ENCODE measurements at regions of chr10 and their contacts with region 1.

Region 1: DNA sequence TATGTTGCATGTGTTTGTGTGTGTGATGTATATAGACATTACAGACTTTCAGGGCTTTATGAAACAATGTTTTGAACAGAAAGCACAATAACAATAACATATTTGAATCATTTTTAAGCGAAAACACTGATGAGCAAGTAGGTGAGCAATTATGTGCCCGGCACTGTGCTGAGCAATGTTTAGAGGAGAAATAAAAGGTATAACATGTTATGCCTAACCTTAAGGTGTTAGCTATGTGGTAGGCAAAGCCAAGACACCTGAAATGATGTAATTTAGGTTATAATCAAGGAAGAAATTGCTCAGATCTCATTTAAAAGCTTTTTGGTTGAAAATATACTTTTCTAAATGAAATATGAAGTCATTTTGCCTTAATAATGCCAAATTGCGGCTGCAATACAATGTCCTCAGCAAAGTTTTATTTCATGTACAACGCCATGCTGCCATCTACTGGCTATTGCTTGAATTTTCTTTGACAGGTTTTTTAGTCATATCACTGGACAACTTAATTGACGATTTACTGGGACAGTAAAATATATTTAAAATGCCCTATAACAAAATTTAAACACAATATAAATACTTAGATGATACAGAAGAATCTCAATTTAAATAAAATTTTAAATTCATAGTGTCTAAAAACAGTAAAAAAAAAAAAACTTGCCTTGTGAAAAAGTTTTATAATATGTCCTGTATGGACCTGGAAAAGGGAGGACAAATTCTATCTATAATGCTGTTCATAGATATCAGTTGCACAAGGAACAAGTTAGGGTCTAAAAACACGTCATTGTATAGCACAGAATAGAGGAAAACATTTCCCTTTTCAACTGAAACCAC is 131.1 kb upstream of the CDK1 start:
- DNase-seq: peak; percentile 42
- H3K4me3 Mint-ChIP-seq: no peak overlapping the region
- H3K27ac Mint-ChIP-seq: no peak overlapping the region
- H3K4me1 Mint-ChIP-seq: peaks cover 4% of the 10 kb centered on the region
- H3K27me3 Mint-ChIP-seq: no peaks in the 10 kb centered on the region

Region 2: GRCh38 chr10:60726257-60726656 is 79.1 kb after region 1 on chr10:
- CTCF ChIA-PET with region 1: no interaction called
- DNase-seq: no peak
- H3K4me3 Mint-ChIP-seq: peak overlapping the region; percentile 73
- H3K27ac Mint-ChIP-seq: peak overlapping the region; percentile 95
- H3K4me1 Mint-ChIP-seq: peaks cover 75% of the 10 kb centered on the region
- H3K27me3 Mint-ChIP-seq: peaks cover 3% of the 10 kb centered on the region

Region 3: DNA sequence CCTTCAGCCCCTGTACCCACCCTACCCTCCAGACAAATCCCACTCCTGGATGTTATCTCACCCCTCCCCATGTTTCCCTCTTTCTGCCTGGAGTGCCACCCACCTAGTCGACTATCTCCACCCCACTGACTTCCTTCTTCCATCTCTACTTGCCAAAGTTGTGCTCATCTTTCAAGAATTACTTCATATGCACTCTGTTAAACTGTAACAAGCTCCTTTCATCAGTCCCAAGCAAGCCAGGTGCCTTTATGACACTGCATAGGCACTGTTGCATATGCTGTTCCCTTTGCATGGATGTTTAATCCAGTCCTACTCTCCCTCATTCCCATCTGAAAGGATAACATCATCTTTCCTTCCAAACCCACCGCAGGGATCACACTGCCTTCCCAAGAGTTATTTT is 122.2 kb after region 1 on chr10:
- CTCF ChIA-PET with region 1: interaction called, 19 read pairs
- DNase-seq: no peak
- H3K4me3 Mint-ChIP-seq: no peak overlapping the region
- H3K27ac Mint-ChIP-seq: no peak overlapping the region
- H3K4me1 Mint-ChIP-seq: peaks cover 12% of the 10 kb centered on the region
- H3K27me3 Mint-ChIP-seq: peaks cover 10% of the 10 kb centered on the region

Measured in activated naive CD4-positive, alpha-beta T cell treated with anti-CD3 and anti-CD28 coated beads, Interleukin-2, amount 10 ng/mL, durations not matched to agents 7 days and 5 days (primary cell).